Caco-2 (cell line): ENCODE measurements at regions of chr12 and their contacts with region 1.

Region 1: DNA sequence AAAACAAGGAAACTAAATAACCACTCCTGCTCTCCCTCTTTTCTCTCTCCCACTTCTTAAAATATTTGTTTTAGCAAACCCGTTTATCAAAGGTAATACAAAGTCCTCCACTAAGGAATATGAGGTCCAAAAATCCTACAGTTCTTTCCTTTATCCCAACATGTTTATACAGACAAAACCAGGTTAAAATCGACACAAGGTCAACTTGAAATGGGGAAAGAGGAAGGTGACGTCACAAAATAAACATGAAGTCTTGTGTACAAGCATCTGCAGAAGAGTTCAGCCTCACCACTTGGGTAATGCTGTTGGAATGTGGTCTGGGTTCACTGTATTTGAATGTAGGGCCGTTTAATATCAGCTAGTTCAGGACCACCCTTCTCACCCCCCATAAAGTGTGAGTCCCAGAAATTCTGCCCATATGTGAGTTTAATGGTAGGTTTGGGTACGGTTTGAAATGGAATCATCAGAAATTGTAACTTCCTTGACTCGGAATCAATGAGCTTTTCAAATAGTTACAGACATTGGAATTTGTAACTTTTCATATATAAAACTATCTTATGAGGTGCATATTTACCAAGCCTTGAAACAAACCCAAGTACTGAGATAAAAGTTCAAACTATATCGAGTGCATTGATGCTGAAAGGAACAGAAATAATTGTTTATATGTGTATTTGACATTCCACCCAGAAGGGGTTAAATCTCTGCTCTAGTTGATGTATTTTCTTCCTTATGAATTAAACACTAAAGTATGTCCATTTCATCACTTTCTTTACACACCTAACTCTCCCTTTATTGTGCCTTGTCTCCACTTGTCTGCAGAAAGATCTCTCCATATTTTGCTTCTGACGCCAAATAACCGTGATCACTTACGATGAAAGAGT is 120.1 kb upstream of the SLC38A2 start:
- DNase-seq: peak; percentile 80 to 83
- H3K4me3 ChIP-seq: no peak overlapping the region
- H3K4me3 Mint-ChIP-seq: peak overlapping the region; percentile 53
- H3K27ac Mint-ChIP-seq: peak overlapping the region; percentile 79
- H3K4me1 ChIP-seq: peaks cover 52% of the 10 kb centered on the region
- H3K4me1 Mint-ChIP-seq: peaks cover 25% of the 10 kb centered on the region
- H3K27me3 ChIP-seq: no peaks in the 10 kb centered on the region
- H3K27me3 Mint-ChIP-seq: no peaks in the 10 kb centered on the region
- CTCF ChIP-seq: no peak

Region 2: DNA sequence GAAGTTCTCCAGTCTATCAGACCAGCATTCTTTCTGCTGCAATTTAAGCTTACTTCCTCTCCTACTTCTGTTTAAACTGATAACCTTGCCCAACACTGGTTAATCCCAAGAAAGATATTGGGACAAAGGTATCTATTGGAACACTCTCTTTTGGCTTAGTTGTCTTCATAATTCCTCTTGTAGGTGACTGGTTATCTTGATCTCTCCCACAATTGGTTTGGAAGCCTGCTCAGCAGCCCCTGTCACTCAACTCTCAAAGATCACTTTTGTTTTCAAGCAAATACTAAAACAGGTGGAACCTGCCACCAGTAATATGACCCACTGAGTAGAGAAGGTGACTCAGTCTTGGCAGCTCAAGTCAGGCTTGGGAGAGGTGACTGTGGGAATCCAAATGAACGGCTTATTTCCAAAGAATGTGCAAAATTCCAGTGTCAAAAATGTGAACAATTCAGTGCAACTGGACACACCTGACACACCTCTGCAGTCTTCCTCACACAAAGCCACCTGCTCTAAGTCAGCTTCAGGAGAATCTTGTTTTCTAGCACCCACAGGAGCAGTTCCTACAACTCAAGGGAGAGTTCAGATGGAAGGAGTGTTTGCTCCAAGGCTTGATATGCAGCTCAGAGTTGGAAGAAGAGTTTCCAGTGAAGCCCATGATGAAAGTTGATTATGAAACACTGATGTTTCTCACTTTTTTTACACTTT is 36.9 kb before region 1 on chr12:
- CTCF ChIA-PET with region 1: no interaction called
- POLR2A ChIA-PET with region 1: no interaction called
- intact Hi-C with region 1: loop called (anchors 1 kb)
- DNase-seq: peak; percentile 84 to 87
- H3K4me3 ChIP-seq: no peak overlapping the region
- H3K4me3 Mint-ChIP-seq: peak overlapping the region; percentile 32
- H3K27ac Mint-ChIP-seq: peak overlapping the region; percentile 65
- H3K4me1 ChIP-seq: peaks cover 58% of the 10 kb centered on the region
- H3K4me1 Mint-ChIP-seq: peaks cover 46% of the 10 kb centered on the region
- H3K27me3 ChIP-seq: no peaks in the 10 kb centered on the region
- H3K27me3 Mint-ChIP-seq: no peaks in the 10 kb centered on the region
- CTCF ChIP-seq: no peak

Region 3: DNA sequence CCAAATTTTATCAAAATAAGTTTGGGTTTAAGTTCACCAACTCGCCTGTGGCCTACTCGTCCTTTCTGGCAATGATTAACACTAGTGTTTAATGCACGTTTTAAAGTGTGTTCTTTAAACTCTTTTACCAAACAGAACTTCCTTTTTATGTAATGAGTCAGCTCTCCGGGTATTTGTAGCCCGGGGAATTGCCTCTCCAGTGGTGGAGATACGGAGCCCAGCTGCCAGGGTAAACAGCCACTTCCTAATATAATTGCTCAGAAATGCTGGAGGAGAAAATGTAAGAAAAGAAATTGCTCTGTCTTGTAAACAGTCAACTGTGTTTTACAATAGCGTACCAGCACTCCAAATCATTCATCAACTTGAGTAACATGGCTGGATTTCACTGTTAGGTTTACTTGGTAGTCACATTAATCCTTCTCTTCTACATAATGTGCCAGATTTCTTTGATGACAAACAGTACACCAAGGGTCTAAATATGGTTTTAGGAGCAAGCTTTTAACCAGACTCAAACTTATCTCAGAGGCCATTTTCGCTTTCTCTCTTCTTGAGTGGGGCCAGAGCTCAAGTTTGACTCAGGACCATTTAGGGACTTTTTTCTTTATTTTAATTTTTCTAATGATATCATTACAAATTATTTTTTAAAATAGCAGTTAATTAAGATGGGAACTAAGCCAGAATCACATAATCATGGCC is 18.9 kb before region 1 on chr12:
- CTCF ChIA-PET with region 1: no interaction called
- POLR2A ChIA-PET with region 1: no interaction called
- intact Hi-C with region 1: loop called (anchors 1 kb)
- DNase-seq: peak; percentile 77 to 84
- H3K4me3 ChIP-seq: no peak overlapping the region
- H3K4me3 Mint-ChIP-seq: peak overlapping the region; percentile 62
- H3K27ac Mint-ChIP-seq: peak overlapping the region; percentile 84
- H3K4me1 ChIP-seq: peaks cover 48% of the 10 kb centered on the region
- H3K4me1 Mint-ChIP-seq: peaks cover 26% of the 10 kb centered on the region
- H3K27me3 ChIP-seq: no peaks in the 10 kb centered on the region
- H3K27me3 Mint-ChIP-seq: no peaks in the 10 kb centered on the region
- CTCF ChIP-seq: no peak

Region 4: DNA sequence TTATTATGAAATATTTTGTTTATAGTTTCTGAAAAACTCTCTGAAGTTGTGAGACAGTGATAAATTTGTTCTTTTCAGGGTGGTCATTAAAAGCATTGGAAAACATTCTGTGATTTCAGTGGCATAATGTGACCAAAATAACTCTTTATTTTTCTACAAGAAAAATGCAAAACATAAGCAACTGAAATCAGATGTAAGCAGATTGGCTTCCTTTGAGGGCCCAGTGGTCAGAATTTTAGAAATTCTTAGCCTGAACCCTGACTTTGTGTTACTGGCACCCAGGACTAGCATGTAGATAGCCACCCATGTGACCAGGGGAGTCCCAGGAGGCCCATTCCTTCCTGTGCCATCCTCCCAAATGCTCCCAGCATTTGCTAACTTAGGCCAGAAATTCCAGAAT is 25.5 kb after region 1 on chr12:
- CTCF ChIA-PET with region 1: no interaction called
- POLR2A ChIA-PET with region 1: no interaction called
- intact Hi-C with region 1: loop called (anchors 2 kb)
- DNase-seq: no peak
- H3K4me3 ChIP-seq: no peak overlapping the region
- H3K4me3 Mint-ChIP-seq: no peak overlapping the region
- H3K27ac Mint-ChIP-seq: no peak overlapping the region
- H3K4me1 ChIP-seq: peaks cover 19% of the 10 kb centered on the region
- H3K4me1 Mint-ChIP-seq: peaks cover 20% of the 10 kb centered on the region
- H3K27me3 ChIP-seq: no peaks in the 10 kb centered on the region
- H3K27me3 Mint-ChIP-seq: no peaks in the 10 kb centered on the region
- CTCF ChIP-seq: no peak

Region 5: GRCh38 chr12:46523863-46524770 is 31.4 kb after region 1 on chr12:
- CTCF ChIA-PET with region 1: no interaction called
- POLR2A ChIA-PET with region 1: no interaction called
- intact Hi-C with region 1: loop called (anchors 1 kb)
- DNase-seq: peak; percentile 53 to 80
- H3K4me3 ChIP-seq: no peak overlapping the region
- H3K4me3 Mint-ChIP-seq: peak overlapping the region; percentile 60
- H3K27ac Mint-ChIP-seq: peak overlapping the region; percentile 50
- H3K4me1 ChIP-seq: peaks cover 25% of the 10 kb centered on the region
- H3K4me1 Mint-ChIP-seq: peaks cover 26% of the 10 kb centered on the region
- H3K27me3 ChIP-seq: no peaks in the 10 kb centered on the region
- H3K27me3 Mint-ChIP-seq: no peaks in the 10 kb centered on the region
- CTCF ChIP-seq: no peak